ENCODE measurements at regions of chr14 and their contacts with region 1.

Region 1: GRCh38 chr14:95452176-95452892 is 64.1 kb downstream of the SYNE3 start:
- DNase-seq: peak; percentile 45

Region 2: GRCh38 chr14:95255487-95255886 is 196.8 kb before region 1 on chr14:
- CTCF ChIA-PET with region 1: no interaction called
- POLR2A ChIA-PET with region 1: no interaction called
- DNase-seq: peak; percentile 53

Region 3: GRCh38 chr14:95463171-95463901 is 11.0 kb after region 1 on chr14:
- CTCF ChIA-PET with region 1: interaction called, 10 read pairs
- POLR2A ChIA-PET with region 1: no interaction called
- DNase-seq: no peak